Right cardiac atrium (tissue), 5 donors: ENCODE measurements at regions of chr15 and their contacts with region 1.

Region 1: DNA sequence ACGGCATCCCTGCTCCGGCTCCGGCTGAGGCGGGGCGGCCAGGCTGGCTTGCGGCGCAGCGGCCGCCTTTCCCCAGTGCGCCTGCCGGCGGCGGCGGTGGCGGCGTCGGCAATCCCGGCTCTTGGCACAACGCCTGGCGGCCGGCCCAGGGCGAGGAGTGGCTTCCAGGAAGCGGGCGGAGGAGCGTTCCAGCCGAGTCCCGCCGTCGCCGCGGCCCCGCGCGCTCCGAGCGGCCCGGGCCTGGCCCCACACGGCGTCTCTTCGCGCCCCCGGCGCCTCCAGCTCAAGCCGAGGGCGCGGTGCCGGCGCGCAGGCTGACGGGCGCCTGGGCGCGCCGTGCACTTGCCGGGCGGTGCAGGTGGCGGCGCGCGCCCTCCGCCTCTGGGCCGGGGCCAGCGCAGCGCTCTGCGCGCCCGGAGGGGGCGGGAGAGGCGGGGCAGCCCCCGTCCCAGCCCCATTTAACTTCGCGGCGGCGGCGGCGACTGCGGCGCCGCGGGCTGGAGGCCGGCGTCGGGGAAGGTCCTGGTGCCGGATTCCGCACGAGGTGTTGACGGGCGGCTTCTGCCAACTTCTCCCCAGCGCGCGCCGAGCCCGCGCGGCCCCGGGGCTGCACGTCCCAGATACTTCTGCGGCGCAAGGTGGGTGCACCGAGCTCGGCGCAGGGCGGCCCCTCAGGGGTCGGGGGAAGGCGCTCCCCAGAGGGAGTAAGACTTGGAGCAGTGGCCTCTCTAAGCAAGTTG is at the start of gene ADAMTSL3:
- DNase-seq: peak; percentile 91 to 96 (median 96)
- ATAC-seq: peak; percentile 75 to 79
- H3K4me3 ChIP-seq: peak within 1 kb of the TSS; percentile 64
- H3K27ac ChIP-seq: peak within 1 kb of the TSS; percentile 84
- H3K4me1 ChIP-seq: peaks cover 14% of the 10 kb centered on the region
- H3K27me3 ChIP-seq: no peaks in the 10 kb centered on the region
- total RNA-seq, gene ADAMTSL3: 31.3 to 50.2 (median 47.1) TPM

Region 2: DNA sequence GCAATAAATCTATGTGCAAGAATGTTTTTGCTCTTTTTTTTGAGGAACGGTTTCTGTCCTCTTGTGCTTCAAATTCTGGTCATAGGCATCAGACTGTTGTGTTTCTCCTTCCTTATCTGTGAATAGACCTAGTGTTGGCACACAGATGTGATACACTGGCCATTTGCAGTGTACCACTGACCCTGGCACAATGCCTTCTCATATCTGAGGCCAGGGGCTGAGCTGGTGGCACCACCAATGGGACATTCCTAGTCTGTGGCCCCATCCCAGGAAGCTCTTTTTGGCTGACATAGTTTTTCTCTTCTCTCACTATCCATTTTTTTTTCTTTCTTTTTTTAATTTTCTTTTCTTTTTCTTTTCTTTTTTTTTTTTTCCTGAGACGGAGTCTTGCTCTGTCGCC is 166.3 kb before region 1 on chr15:
- intact Hi-C with region 1: no loop called
- DNase-seq: no peak
- ATAC-seq: no peak
- H3K4me3 ChIP-seq: no peak overlapping the region
- H3K27ac ChIP-seq: no peak overlapping the region
- H3K4me1 ChIP-seq: no peaks in the 10 kb centered on the region
- H3K27me3 ChIP-seq: peaks cover 2% of the 10 kb centered on the region

Region 3: DNA sequence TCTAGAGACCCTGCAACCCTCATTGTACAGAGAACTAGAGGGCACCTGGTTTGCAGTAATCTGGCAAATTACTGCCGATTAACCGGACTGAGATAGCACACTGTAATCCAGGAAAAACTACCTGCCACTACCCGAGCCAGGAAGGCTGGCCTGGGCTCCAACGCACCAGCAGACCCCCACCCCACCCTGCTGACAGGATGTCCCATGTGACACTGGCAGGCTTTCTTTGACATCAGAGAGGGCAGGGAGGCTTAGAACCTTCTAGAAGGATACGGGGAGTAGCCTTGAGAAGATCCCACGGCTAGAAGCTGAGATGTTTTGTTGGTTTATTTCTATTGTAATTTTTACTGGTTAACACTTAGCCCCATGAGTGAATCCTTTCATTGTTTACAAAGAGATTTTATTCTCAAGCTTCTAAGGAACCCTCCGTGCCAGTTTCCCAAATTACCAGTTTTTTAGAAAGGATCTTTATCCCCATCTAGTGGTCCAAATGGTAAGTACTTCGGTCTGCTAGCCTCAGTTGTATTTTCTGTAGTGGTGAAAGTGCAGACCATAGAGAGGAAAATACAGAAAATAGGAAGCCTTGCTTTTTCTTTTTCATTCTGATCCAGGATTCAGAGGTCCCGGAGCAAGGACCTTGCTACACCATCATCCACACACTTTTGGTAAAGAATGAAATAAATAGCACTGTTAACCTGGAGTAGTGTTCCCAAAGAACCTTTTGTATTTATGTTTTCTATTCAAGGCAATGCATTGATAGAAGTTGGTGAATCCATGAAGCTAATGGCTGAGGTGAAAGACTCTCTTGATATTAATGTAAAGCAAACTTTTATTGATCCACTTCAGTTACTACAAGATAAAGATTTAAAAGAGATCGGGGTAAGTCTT is 81.7 kb before region 1 on chr15:
- intact Hi-C with region 1: loop called in 1 of 4 experiments (anchors 10 kb)
- DNase-seq: no peak
- ATAC-seq: peak in 1 of 2 donors; percentile 43
- H3K4me3 ChIP-seq: no peak overlapping the region
- H3K27ac ChIP-seq: no peak overlapping the region
- H3K4me1 ChIP-seq: no peaks in the 10 kb centered on the region
- H3K27me3 ChIP-seq: no peaks in the 10 kb centered on the region

Region 4: GRCh38 chr15:83714931-83715628 is 61.3 kb after region 1 on chr15:
- intact Hi-C with region 1: no loop called
- DNase-seq: no peak
- ATAC-seq: no peak
- H3K4me3 ChIP-seq: no peak overlapping the region
- H3K27ac ChIP-seq: no peak overlapping the region
- H3K4me1 ChIP-seq: peaks cover 6% of the 10 kb centered on the region
- H3K27me3 ChIP-seq: no peaks in the 10 kb centered on the region

Region 5: DNA sequence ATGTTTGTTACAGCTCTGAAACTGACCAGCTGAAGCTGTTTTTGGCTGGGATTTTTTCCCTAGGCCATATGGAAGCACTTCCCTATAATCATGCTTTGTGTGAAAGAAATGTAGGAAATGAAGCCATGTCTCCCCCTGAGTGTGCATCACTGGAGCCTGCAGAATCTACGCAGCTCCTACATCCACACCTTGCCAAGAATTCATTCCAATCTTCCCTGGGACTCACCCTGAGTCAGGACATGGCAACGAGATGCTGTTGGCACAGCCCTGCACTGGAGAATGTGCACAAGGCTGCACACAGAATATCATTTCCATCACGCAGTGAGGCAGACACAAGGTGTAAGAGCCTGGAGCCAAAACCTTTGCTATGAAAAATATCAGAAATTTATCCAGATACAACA is 189.7 kb after region 1 on chr15:
- intact Hi-C with region 1: loop called in 1 of 4 experiments (anchors 5 kb)
- DNase-seq: peak; percentile 58 to 77 (median 69)
- ATAC-seq: peak; percentile 74 to 77
- H3K4me3 ChIP-seq: no peak overlapping the region
- H3K27ac ChIP-seq: peak overlapping the region; percentile 20
- H3K4me1 ChIP-seq: peaks cover 12% of the 10 kb centered on the region
- H3K27me3 ChIP-seq: no peaks in the 10 kb centered on the region